Vagina (tissue), 2 donors: ENCODE measurements at regions of chr5 and their contacts with region 1.

Region 1: GRCh38 chr5:151463137-151464029 is 16.0 kb downstream of the SLC36A1 start:
- DNase-seq: no peak
- H3K4me3 ChIP-seq: no peak overlapping the region
- H3K27ac ChIP-seq: no peak overlapping the region
- H3K4me1 ChIP-seq: no peaks in the 10 kb centered on the region
- H3K27me3 ChIP-seq: no peaks in the 10 kb centered on the region
- CTCF ChIP-seq: no peak
- POLR2A ChIP-seq: no peak

Region 2: DNA sequence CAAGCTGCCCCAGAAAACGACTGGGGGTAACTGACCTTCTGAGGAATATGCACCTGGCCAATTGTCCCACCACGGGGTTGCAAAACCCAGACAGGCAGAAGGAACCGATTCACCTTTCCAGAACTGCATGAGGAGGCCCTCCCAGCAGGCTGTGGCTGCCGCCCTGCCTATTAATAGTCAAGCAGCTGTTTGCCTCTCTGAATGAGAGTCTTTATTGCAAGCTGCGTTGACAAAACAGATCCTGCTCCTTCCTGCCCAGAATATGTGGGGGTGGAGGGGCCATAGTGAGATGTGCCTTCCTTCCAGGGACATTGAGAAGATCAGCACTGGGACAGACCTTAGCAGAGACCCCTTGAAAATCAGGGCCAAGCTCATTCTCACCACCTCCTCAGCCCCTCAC is 1124.2 kb before region 1 on chr5:
- intact Hi-C with region 1: no loop called
- DNase-seq: no peak
- H3K4me3 ChIP-seq: no peak overlapping the region
- H3K27ac ChIP-seq: no peak overlapping the region
- H3K4me1 ChIP-seq: no peaks in the 10 kb centered on the region
- H3K27me3 ChIP-seq: no peaks in the 10 kb centered on the region
- CTCF ChIP-seq: no peak
- POLR2A ChIP-seq: no peak

Region 3: GRCh38 chr5:151240924-151241635 is 222.3 kb before region 1 on chr5:
- intact Hi-C with region 1: no loop called
- DNase-seq: no peak
- H3K4me3 ChIP-seq: no peak overlapping the region
- H3K27ac ChIP-seq: no peak overlapping the region
- H3K4me1 ChIP-seq: no peaks in the 10 kb centered on the region
- H3K27me3 ChIP-seq: no peaks in the 10 kb centered on the region
- CTCF ChIP-seq: no peak
- POLR2A ChIP-seq: no peak

Region 4: GRCh38 chr5:151632524-151632923 is 169.1 kb after region 1 on chr5:
- intact Hi-C with region 1: loop called (anchors 10 kb)
- DNase-seq: no peak
- H3K4me3 ChIP-seq: no peak overlapping the region
- H3K27ac ChIP-seq: no peak overlapping the region
- H3K4me1 ChIP-seq: peaks cover 32% of the 10 kb centered on the region
- H3K27me3 ChIP-seq: no peaks in the 10 kb centered on the region
- CTCF ChIP-seq: no peak
- POLR2A ChIP-seq: no peak